ENCODE measurements at regions of chr5 and their contacts with region 1.

Region 1: GRCh38 chr5:56128113-56128512 is 105.0 kb downstream of the ANKRD55 start:
- DNase-seq: peak; percentile 31
- ATAC-seq: peak; percentile 49
- H3K4me3 Mint-ChIP-seq: peak overlapping the region; percentile 7
- H3K27ac Mint-ChIP-seq: peak overlapping the region; percentile 53
- H3K4me1 Mint-ChIP-seq: peaks cover 28% of the 10 kb centered on the region
- H3K27me3 Mint-ChIP-seq: no peaks in the 10 kb centered on the region

Region 2: GRCh38 chr5:56088967-56089829 is 38.9 kb before region 1 on chr5:
- CTCF ChIA-PET with region 1: no interaction called
- POLR2A ChIA-PET with region 1: no interaction called
- DNase-seq: no peak
- ATAC-seq: no peak
- H3K4me3 Mint-ChIP-seq: no peak overlapping the region
- H3K27ac Mint-ChIP-seq: no peak overlapping the region
- H3K4me1 Mint-ChIP-seq: peaks cover 51% of the 10 kb centered on the region
- H3K27me3 Mint-ChIP-seq: no peaks in the 10 kb centered on the region

Region 3: DNA sequence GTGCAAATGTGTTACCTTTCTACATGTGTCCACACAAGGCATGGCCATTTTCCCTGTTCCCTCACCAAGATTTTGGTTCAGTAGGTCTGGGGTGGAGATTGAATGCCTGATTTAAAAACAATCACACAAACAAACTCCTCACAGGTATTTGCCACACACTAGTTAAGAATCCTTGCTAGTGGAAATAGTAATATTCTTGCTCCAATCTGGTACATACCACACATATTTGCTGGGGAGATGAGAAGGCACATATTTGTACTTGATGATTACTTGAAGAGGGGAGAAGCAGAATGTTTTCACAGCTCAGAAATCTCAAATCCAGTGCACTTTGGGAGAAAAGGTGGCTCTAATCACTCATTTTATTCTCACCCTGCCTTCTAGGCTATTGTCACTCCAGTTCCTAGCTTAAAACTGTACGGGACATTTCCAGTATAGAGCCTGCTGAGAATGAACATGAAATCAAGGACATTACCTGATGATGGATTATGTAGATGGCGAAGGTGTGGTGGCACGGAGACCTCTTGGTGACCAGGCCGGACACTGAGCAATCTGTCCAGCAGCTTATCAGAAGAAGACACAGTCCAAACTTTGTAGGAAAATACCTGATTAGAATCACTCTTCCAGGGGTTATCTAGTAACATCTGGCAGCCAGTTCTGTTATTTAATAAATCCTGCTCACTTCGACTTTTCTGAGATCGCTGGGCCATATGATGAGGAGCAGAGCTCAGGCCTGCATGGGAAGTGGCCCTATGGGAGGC is 17.3 kb before region 1 on chr5:
- CTCF ChIA-PET with region 1: no interaction called
- POLR2A ChIA-PET with region 1: no interaction called
- DNase-seq: no peak
- ATAC-seq: no peak
- H3K4me3 Mint-ChIP-seq: no peak overlapping the region
- H3K27ac Mint-ChIP-seq: no peak overlapping the region
- H3K4me1 Mint-ChIP-seq: peaks cover 11% of the 10 kb centered on the region
- H3K27me3 Mint-ChIP-seq: no peaks in the 10 kb centered on the region

Region 4: DNA sequence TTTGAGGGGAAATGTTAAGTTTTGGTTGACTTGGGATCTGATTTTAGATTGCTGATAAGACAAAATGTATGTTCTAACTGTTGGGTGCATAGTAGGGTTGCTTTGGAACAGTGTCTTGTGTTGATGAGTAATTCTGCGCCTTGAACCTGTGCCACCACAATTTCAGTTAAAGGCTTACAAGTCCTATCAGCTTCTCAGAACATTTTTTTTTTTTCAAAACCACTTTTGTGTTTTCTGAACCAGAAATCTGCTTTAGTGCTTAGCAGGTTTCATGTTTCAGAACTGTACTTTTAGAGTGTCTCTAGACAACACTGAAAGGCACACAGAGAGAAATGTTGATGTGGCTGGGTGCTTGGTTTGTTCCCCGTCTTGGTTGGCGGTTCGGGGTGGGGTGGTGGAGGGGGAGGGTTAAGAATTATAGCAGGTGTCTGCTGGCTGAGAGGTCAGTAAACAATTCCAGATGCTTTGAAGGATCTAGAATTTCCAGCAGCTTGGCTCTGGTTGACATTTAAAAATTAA is 20.4 kb after region 1 on chr5:
- CTCF ChIA-PET with region 1: interaction called, 10 read pairs
- POLR2A ChIA-PET with region 1: no interaction called
- DNase-seq: peak; percentile 69
- ATAC-seq: peak; percentile 80
- H3K4me3 Mint-ChIP-seq: peak overlapping the region; percentile 18
- H3K27ac Mint-ChIP-seq: peak overlapping the region; percentile 77
- H3K4me1 Mint-ChIP-seq: peaks cover 40% of the 10 kb centered on the region
- H3K27me3 Mint-ChIP-seq: no peaks in the 10 kb centered on the region